ENCODE measurements at regions of chr1 and their contacts with region 1.

Region 1: DNA sequence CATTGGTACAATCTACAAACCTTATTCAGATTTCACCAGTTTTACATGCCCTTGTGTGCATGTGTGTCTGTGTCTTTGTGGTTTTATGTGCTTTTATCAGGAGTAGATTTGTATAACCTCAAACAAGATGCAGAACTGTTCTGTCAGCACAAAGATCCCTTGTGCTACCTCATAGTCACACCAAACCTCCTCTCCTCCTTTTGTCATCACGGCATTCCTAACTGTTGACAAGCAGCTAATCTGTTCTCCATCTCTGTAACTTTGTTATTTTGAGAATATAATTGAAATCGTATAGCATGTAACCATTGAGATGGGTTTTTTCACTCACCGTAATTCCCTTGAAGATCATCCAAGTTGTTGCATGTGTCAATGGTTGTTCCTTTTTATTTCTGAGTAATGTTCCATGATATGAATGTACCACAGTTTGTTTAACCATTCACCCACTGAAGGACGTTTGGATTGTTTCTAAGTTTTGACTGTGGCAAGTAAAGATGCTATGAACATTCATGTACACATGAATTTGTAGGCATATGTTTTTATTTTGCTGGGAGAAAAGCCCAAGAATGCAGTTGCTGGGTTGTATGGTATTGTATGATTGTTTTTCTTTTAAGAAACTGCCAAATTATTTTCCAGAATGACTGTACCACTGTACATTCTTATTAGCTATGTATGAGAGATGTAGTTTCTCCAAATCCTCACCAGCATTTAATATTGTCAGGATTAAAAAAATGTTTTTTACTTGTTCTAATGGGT is 78.1 kb upstream of the B3GALT2 start:
- DNase-seq: no peak
- H3K4me3 ChIP-seq: no peak overlapping the region
- H3K4me3 Mint-ChIP-seq: no peak overlapping the region
- H3K27ac ChIP-seq: no peak overlapping the region
- H3K27ac Mint-ChIP-seq: no peak overlapping the region
- H3K4me1 ChIP-seq: no peaks in the 10 kb centered on the region
- H3K4me1 Mint-ChIP-seq: peaks cover 0 to 4% (median 1%) of the 10 kb centered on the region in 4 donors
- H3K27me3 ChIP-seq: no peaks in the 10 kb centered on the region
- H3K27me3 Mint-ChIP-seq: no peaks in the 10 kb centered on the region

Region 2: DNA sequence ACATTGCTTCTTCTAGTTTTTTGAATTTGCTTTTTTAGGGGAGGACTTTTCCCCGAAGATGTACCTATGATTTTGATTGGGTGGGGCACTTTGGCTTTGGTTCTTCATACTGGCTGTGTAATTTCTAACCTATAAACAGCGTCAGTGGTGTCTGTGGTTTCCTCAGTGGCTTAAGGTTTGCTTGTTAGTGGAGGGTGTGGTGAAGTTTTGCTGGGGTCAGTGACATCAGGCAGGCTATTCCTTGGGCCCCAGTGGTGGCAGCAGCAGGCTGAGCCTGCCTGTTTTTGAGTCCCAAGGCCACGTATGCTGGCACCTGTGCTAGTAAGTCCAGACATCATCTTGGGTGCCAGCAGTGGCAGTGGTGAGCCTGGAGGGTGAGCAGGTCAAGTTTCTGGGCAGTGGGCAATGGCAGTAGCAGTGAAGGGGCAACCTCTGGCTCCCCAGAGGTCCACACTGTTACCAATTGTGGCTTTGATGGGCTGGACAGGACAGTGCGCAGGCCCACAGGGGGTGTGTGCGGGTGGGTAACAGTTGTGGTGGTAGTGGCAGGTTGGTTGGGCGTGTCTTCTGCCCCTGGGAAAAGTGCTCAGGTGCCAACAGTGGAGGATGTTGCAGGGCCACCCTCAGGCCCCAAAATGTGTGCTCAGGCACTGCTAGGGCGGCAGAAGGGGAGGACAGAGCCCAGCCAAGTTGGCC is 23.2 kb before region 1 on chr1:
- CTCF ChIA-PET with region 1: no interaction called
- POLR2A ChIA-PET with region 1: no interaction called
- intact Hi-C with region 1: no loop called
- DNase-seq: peak in 2 of 5 donors; percentile 5 to 13
- H3K4me3 ChIP-seq: no peak overlapping the region
- H3K4me3 Mint-ChIP-seq: peak overlapping the region in 4 of 8 donors; percentile 55 to 73 (median 62)
- H3K27ac ChIP-seq: no peak overlapping the region
- H3K27ac Mint-ChIP-seq: peak overlapping the region in 6 of 7 donors; percentile 53 to 83 (median 67)
- H3K4me1 ChIP-seq: peaks cover 30% of the 10 kb centered on the region
- H3K4me1 Mint-ChIP-seq: peaks cover 33 to 49% (median 39%) of the 10 kb centered on the region in 4 donors
- H3K27me3 ChIP-seq: no peaks in the 10 kb centered on the region
- H3K27me3 Mint-ChIP-seq: no peaks in the 10 kb centered on the region

Region 3: DNA sequence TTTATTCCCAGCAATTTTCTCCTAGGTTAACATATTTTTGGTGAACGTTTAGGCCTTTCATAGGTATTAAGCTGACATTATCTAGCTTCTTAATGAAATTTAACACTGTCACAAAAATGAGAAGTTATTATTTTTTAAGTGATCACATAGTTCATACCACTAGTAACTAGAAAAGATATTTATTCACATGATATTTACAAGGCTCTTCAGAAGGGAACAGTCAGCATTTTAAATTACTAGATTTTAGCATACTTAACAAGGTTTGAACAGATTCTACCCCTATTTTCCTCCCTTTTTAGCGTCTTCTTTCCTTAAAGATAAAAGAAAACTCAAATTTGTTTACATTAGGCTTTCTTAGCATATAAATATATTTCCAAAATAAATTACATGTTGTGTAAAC is 12.5 kb before region 1 on chr1:
- CTCF ChIA-PET with region 1: no interaction called
- POLR2A ChIA-PET with region 1: no interaction called
- intact Hi-C with region 1: loop called (anchors 2 kb)
- DNase-seq: no peak
- H3K4me3 ChIP-seq: no peak overlapping the region
- H3K4me3 Mint-ChIP-seq: no peak overlapping the region
- H3K27ac ChIP-seq: no peak overlapping the region
- H3K27ac Mint-ChIP-seq: no peak overlapping the region
- H3K4me1 ChIP-seq: no peaks in the 10 kb centered on the region
- H3K4me1 Mint-ChIP-seq: peaks cover 0 to 2% (median under 1%) of the 10 kb centered on the region in 4 donors
- H3K27me3 ChIP-seq: no peaks in the 10 kb centered on the region
- H3K27me3 Mint-ChIP-seq: no peaks in the 10 kb centered on the region

Region 4: GRCh38 chr1:193275773-193276172 is 11.3 kb after region 1 on chr1:
- CTCF ChIA-PET with region 1: no interaction called
- POLR2A ChIA-PET with region 1: no interaction called
- intact Hi-C with region 1: no loop called
- DNase-seq: no peak
- H3K4me3 ChIP-seq: no peak overlapping the region
- H3K4me3 Mint-ChIP-seq: no peak overlapping the region
- H3K27ac ChIP-seq: no peak overlapping the region
- H3K27ac Mint-ChIP-seq: no peak overlapping the region
- H3K4me1 ChIP-seq: no peaks in the 10 kb centered on the region
- H3K4me1 Mint-ChIP-seq: peaks cover 0 to 6% (median under 1%) of the 10 kb centered on the region in 4 donors
- H3K27me3 ChIP-seq: no peaks in the 10 kb centered on the region
- H3K27me3 Mint-ChIP-seq: no peaks in the 10 kb centered on the region

Region 5: DNA sequence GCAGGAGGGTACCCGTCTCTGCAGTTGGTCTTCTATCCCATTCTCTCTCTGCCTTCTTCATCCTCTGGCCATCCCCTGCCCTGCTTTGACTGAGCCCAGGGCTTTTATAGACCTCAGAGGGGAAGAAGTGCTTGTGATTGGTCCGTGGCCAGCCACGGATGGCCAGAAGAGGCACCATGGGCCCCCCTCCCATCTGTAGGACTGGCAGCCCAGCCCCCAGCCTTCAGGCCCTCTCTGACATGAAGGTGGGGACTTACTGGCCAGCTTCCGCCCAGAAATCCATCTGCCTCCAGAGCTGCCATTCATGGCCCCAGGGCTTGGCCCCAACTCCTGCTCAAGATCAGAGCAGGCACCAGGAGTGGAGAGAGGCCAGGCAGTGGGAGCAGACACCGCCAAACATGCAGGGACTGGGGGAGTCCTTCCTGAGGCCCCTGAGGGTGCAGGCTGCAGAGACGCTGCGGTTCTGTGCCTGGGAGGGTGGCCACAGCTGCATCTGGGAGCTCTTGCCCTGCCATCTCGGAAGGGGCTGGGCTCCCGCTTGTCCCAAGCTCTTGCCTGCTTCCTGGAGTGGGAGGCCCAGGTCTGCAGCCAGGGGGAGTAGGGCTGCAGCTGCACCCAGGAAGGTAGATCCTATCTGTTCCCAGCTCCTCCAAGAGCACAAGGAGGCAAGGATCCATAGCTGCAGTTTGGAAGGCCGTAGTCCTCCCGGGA is 620.5 kb after region 1 on chr1:
- CTCF ChIA-PET with region 1: no interaction called
- POLR2A ChIA-PET with region 1: no interaction called
- intact Hi-C with region 1: no loop called
- DNase-seq: no peak
- H3K4me3 ChIP-seq: no peak overlapping the region
- H3K4me3 Mint-ChIP-seq: peak overlapping the region in 1 of 8 donors; percentile 41
- H3K27ac ChIP-seq: no peak overlapping the region
- H3K27ac Mint-ChIP-seq: peak overlapping the region in 1 of 7 donors; percentile 42
- H3K4me1 ChIP-seq: no peaks in the 10 kb centered on the region
- H3K4me1 Mint-ChIP-seq: peaks cover 1 to 20% (median 4%) of the 10 kb centered on the region in 4 donors
- H3K27me3 ChIP-seq: no peaks in the 10 kb centered on the region
- H3K27me3 Mint-ChIP-seq: no peaks in the 10 kb centered on the region

Measured in CD4-positive, alpha-beta memory T cell (primary cell).